Common myeloid progenitor, CD34-positive (primary cell): ENCODE measurements at regions of chr5 and their contacts with region 1.

Region 1: GRCh38 chr5:121962347-121962670 is 534 bp downstream of the SRFBP1 start:
- DNase-seq: peak in 1 of 3 donors; percentile 6
- H3K4me3 ChIP-seq: peak overlapping the region in 6 of 7 experiments; percentile 74 to 95 (median 90)
- H3K27ac ChIP-seq: peak overlapping the region; percentile 79 to 90
- H3K4me1 ChIP-seq: peaks cover 2 to 23% (median 13%) of the 10 kb centered on the region in 4 experiments
- H3K27me3 ChIP-seq: no peaks in the 10 kb centered on the region

Region 2: GRCh38 chr5:122076664-122077365 is 114.5 kb after region 1 on chr5:
- CTCF ChIA-PET with region 1: interaction called, 16 read pairs
- POLR2A ChIA-PET with region 1: no interaction called
- DNase-seq: peak; percentile 63 to 90 (median 74)
- H3K4me3 ChIP-seq: peak overlapping the region; percentile 33 to 82 (median 67)
- H3K27ac ChIP-seq: peak overlapping the region in 1 of 2 experiments; percentile 57
- H3K4me1 ChIP-seq: peaks cover 16 to 56% (median 29%) of the 10 kb centered on the region in 4 experiments
- H3K27me3 ChIP-seq: peaks cover 0 to 4% (median 2%) of the 10 kb centered on the region in 5 experiments

Region 3: GRCh38 chr5:122180863-122181548 is 218.7 kb after region 1 on chr5:
- CTCF ChIA-PET with region 1: no interaction called
- POLR2A ChIA-PET with region 1: no interaction called
- DNase-seq: peak in 1 of 3 donors; percentile 12
- H3K4me3 ChIP-seq: no peak overlapping the region
- H3K27ac ChIP-seq: no peak overlapping the region
- H3K4me1 ChIP-seq: peaks cover 6 to 24% (median 14%) of the 10 kb centered on the region in 4 experiments
- H3K27me3 ChIP-seq: no peaks in the 10 kb centered on the region